ENCODE measurements at regions of chr4 and their contacts with region 1.

Region 1: GRCh38 chr4:146342600-146343192 is 128.4 kb downstream of the REELD1 start:
- DNase-seq: peak; percentile 47
- ATAC-seq: peak; percentile 51; the same call in 1 of the 2 replicates
- H3K4me3 ChIP-seq: no peak overlapping the region
- H3K27ac ChIP-seq: no peak overlapping the region
- H3K4me1 ChIP-seq: no peaks in the 10 kb centered on the region
- H3K27me3 ChIP-seq: no peaks in the 10 kb centered on the region
- CTCF ChIP-seq: peak; percentile 64
- POLR2A ChIP-seq: no peak
- RAD21 ChIP-seq: peak; percentile 64

Region 2: GRCh38 chr4:145956288-145956890 is 386.3 kb before region 1 on chr4:
- CTCF ChIA-PET with region 1: no interaction called
- POLR2A ChIA-PET with region 1: no interaction called
- dilution Hi-C with region 1: no loop called
- in situ Hi-C with region 1: no loop called
- intact Hi-C with region 1: no loop called
- DNase-seq: peak; percentile 40
- ATAC-seq: peak; percentile 42; the same call in 1 of the 2 replicates
- H3K4me3 ChIP-seq: no peak overlapping the region
- H3K27ac ChIP-seq: no peak overlapping the region
- H3K4me1 ChIP-seq: no peaks in the 10 kb centered on the region; the same call in 1 of the 2 replicates
- H3K27me3 ChIP-seq: no peaks in the 10 kb centered on the region; the same call in 1 of the 2 replicates
- CTCF ChIP-seq: peak; percentile 61
- POLR2A ChIP-seq: no peak
- RAD21 ChIP-seq: peak; percentile 49

Region 3: DNA sequence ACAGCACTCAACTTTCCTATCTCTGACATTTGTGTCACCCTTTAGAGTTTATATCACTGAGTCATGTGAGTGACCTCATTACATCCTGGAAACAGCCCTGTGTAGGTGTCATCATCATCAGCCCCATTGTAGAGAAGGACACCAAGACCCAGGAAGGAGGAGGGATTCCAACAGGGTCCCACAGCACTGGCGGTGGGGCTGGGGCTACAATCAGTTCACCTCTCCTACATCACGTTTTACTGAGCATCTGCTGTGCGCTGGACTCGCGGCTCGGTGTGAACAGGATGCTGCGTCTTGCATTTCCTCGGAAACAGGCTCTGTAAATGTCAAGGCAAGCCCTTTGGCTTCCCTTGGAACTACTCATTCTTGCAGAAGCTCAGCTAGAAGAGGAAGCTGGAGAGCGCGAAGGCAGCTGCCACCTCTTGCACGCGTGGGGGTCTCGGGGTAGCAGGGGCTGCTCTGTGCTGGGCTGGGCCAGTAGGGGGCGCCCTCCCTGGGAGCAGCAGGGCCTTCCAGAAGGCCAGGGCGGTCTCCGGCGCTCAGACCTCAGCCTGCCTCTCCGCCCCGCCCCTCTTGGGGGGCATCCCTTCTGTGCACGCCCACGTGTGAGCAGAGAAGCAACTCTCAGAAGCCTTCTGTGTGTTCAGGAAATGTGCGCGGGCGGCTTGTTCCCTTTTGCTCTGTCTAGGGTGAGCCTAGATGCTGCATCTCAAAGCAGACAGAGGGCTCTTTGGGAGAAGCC is 99.4 kb before region 1 on chr4:
- CTCF ChIA-PET with region 1: no interaction called
- POLR2A ChIA-PET with region 1: no interaction called
- dilution Hi-C with region 1: no loop called
- in situ Hi-C with region 1: no loop called
- intact Hi-C with region 1: loop called (anchors 2 kb)
- DNase-seq: peak; percentile 37
- ATAC-seq: no peak
- H3K4me3 ChIP-seq: no peak overlapping the region
- H3K27ac ChIP-seq: no peak overlapping the region
- H3K4me1 ChIP-seq: peaks cover 11% of the 10 kb centered on the region
- H3K27me3 ChIP-seq: no peaks in the 10 kb centered on the region
- CTCF ChIP-seq: 0 out of 2 replicates have a peak, but pooled peaks have one; percentile 4
- POLR2A ChIP-seq: no peak
- RAD21 ChIP-seq: no peak

Region 4: GRCh38 chr4:146638801-146639605 is 296.3 kb after region 1 on chr4 and contains the start of gene POU4F2:
- CTCF ChIA-PET with region 1: no interaction called
- POLR2A ChIA-PET with region 1: no interaction called
- dilution Hi-C with region 1: no loop called
- in situ Hi-C with region 1: no loop called
- intact Hi-C with region 1: loop called (anchors 1 kb)
- DNase-seq: no peak
- ATAC-seq: peak; percentile 62
- H3K4me3 ChIP-seq: no peak within 1 kb of the TSS; the same call in 1 of the 2 replicates
- H3K27ac ChIP-seq: no peak within 1 kb of the TSS
- H3K4me1 ChIP-seq: no peaks in the 10 kb centered on the region
- H3K27me3 ChIP-seq: peaks cover 45% of the 10 kb centered on the region
- CTCF ChIP-seq: no peak
- POLR2A ChIP-seq: no peak
- RAD21 ChIP-seq: no peak
- total RNA-seq, gene POU4F2: not detected in 2 replicates

Region 5: GRCh38 chr4:146709956-146710355 is 367.3 kb after region 1 on chr4:
- CTCF ChIA-PET with region 1: no interaction called
- POLR2A ChIA-PET with region 1: no interaction called
- dilution Hi-C with region 1: no loop called
- in situ Hi-C with region 1: no loop called
- intact Hi-C with region 1: loop called (anchors 5 kb)
- DNase-seq: no peak
- ATAC-seq: no peak
- H3K4me3 ChIP-seq: no peak overlapping the region
- H3K27ac ChIP-seq: no peak overlapping the region
- H3K4me1 ChIP-seq: no peaks in the 10 kb centered on the region
- H3K27me3 ChIP-seq: no peaks in the 10 kb centered on the region
- CTCF ChIP-seq: no peak
- POLR2A ChIP-seq: no peak
- RAD21 ChIP-seq: no peak

Region 6: DNA sequence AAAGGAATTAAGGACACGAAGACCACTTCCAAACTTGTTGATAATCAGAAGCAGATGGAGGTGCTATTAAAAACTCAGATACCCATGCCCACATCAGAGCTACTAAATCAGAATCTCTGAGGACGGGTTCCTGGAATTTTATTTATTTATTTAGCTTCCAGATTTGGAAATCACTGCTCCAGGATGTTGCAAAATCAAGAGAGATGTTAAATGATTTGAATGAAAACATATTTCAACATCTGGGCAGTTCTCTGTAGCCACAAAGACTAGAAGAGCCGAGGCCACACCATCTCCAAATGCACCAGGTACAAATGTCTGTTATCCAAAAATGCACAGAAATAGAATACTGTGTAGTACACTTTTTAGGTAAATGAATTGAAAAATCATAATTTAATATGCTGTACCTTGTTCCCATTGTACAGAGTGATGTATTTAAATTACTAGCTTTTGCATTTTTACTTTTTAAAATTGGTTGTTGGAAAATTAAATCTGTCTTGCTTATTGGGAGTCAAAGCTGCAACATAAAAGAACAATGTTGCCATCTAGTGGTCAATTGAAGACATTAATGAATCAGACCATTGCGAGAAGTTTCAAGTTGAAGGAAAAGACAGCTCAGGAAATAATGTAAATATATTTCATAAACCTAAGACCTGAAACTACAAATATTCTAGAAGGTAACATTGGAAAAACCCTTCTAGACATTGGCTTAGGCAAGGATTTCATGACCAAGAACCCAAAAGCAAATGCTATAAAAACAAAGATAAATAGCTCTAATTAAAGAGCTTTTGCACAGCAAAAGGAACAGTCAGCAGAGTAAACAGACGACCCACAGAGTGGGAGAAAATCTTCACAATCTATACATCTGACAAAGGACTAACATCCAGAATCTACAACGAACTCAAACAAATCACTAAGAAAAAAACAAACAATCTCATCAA is 754.2 kb after region 1 on chr4:
- CTCF ChIA-PET with region 1: no interaction called
- POLR2A ChIA-PET with region 1: no interaction called
- dilution Hi-C with region 1: no loop called
- in situ Hi-C with region 1: loop called (anchors 10 kb)
- intact Hi-C with region 1: loop called (anchors 2 kb)
- DNase-seq: peak; percentile 69
- ATAC-seq: peak; percentile 79
- H3K4me3 ChIP-seq: no peak overlapping the region
- H3K27ac ChIP-seq: no peak overlapping the region
- H3K4me1 ChIP-seq: peaks cover 5% of the 10 kb centered on the region
- H3K27me3 ChIP-seq: no peaks in the 10 kb centered on the region
- CTCF ChIP-seq: peak; percentile 74
- POLR2A ChIP-seq: no peak
- RAD21 ChIP-seq: peak; percentile 75

Measured in IMR-90 (cell line).